Aorta (tissue), 5 donors: ENCODE measurements at regions of chr3 and their contacts with region 1.

Region 1: GRCh38 chr3:33202711-33203457 is 15.7 kb downstream of the SUSD5 start:
- DNase-seq: no peak
- ATAC-seq: peak; percentile 39
- H3K4me3 ChIP-seq: no peak overlapping the region
- H3K27ac ChIP-seq: peak overlapping the region; percentile 23 to 98
- H3K4me1 ChIP-seq: peaks cover 8 to 9% of the 10 kb centered on the region in 2 donors
- H3K27me3 ChIP-seq: no peaks in the 10 kb centered on the region

Region 2: GRCh38 chr3:33089515-33089914 is 113.4 kb before region 1 on chr3:
- intact Hi-C with region 1: no loop called
- DNase-seq: no peak
- ATAC-seq: no peak
- H3K4me3 ChIP-seq: no peak overlapping the region
- H3K27ac ChIP-seq: no peak overlapping the region
- H3K4me1 ChIP-seq: peaks cover 0 to 2% of the 10 kb centered on the region in 2 donors
- H3K27me3 ChIP-seq: no peaks in the 10 kb centered on the region

Region 3: GRCh38 chr3:33152363-33153360 is 50.2 kb before region 1 on chr3:
- intact Hi-C with region 1: no loop called
- DNase-seq: no peak
- ATAC-seq: no peak
- H3K4me3 ChIP-seq: no peak overlapping the region
- H3K27ac ChIP-seq: peak overlapping the region in 1 of 2 donors; percentile 1
- H3K4me1 ChIP-seq: peaks cover 9 to 12% of the 10 kb centered on the region in 2 donors
- H3K27me3 ChIP-seq: no peaks in the 10 kb centered on the region

Region 4: GRCh38 chr3:33167716-33168336 is 35.1 kb before region 1 on chr3:
- intact Hi-C with region 1: loop called in 1 of 2 experiments (anchors 5 kb)
- DNase-seq: no peak
- ATAC-seq: peak; percentile 73
- H3K4me3 ChIP-seq: no peak overlapping the region
- H3K27ac ChIP-seq: peak overlapping the region; percentile 73 to 93
- H3K4me1 ChIP-seq: peaks cover 0 to 4% of the 10 kb centered on the region in 2 donors
- H3K27me3 ChIP-seq: no peaks in the 10 kb centered on the region

Region 5: DNA sequence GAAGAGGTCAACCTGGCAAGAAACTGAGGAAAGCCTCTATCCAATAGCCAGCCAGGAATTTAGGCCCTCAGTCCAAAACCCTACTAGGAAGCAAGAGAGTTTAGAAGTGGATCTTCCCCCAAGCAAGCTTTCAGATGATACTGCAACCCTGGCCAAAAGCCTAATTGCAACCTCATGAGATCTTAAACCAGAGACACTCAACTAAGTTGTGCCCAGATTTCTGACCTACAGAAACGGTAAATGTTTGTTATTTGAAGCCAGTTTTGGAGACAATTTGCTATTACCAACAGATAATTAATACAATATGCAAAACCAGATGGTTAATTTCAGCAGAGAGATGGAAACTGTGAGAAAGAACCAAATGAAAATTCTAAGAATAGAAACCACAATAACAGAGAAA is 37.4 kb after region 1 on chr3:
- intact Hi-C with region 1: no loop called
- DNase-seq: no peak
- ATAC-seq: no peak
- H3K4me3 ChIP-seq: no peak overlapping the region
- H3K27ac ChIP-seq: no peak overlapping the region
- H3K4me1 ChIP-seq: no peaks in the 10 kb centered on the region
- H3K27me3 ChIP-seq: no peaks in the 10 kb centered on the region